Activated T-helper 2 cell treated with anti-CD3 and anti-CD28 coated beads, Interferon-gamma antibody, Interleukin-2, Interleukin-4, amounts not matched to agents 10 μg/mL and 5 μg/mL and 100 μg/mL, durations not matched to agents 14 hours and 24 hours and 36 hours (primary cell): ENCODE measurements at regions of chr11 and their contacts with region 1.

Region 1: GRCh38 chr11:9137293-9138132 is 46.1 kb upstream of the SCUBE2 start:
- DNase-seq: peak; percentile 60
- H3K4me3 Mint-ChIP-seq: no peak overlapping the region
- H3K27ac Mint-ChIP-seq: peak overlapping the region; percentile 1
- H3K4me1 Mint-ChIP-seq: peaks cover 33% of the 10 kb centered on the region
- H3K27me3 Mint-ChIP-seq: no peaks in the 10 kb centered on the region

Region 2: DNA sequence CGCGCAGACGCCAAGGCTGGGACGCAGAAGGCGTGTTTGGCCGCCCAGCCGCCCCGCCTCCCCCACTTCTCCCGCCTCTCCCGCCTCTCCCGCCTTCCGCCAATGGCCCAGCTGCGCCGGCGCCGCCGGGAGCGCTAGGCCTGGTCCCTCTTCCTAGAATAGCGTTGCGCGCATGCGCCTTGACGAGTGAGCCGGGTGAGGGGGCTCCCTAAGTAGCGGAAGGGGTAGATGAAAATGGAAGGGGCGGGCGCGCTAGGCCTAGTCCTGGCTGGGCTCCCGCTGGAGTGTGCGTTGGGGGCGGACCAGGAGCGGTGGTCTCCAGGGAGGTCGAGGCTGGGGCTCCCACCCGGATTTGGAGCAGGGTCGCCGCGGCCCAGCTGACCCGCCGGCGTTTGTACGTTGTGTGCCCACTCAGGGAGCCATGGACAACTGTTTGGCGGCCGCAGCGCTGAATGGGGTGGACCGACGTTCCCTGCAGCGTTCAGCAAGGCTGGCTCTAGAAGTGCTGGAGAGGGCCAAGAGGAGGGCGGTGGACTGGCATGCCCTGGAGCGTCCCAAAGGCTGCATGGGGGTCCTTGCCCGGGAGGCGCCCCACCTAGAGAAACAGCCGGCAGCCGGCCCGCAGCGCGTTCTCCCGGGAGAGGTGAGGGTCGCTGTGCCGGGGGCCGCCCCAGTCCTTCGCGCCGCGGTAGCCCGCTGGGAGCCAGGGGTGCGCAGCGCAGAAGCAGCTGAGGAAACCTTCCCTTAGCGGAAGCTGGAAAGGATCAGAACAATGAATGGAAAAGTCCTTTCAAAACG is 226.3 kb before region 1 on chr11 and contains the start of gene AKIP1:
- intact Hi-C with region 1: loop called (anchors 1 kb)
- DNase-seq: peak; percentile 73
- H3K4me3 Mint-ChIP-seq: peak within 1 kb of the TSS; percentile 94
- H3K27ac Mint-ChIP-seq: peak within 1 kb of the TSS; percentile 82
- H3K4me1 Mint-ChIP-seq: peaks cover 36% of the 10 kb centered on the region
- H3K27me3 Mint-ChIP-seq: peaks cover 30% of the 10 kb centered on the region
- total RNA-seq, gene AKIP1: 22.2 and 23.4 TPM in 2 replicates

Region 3: GRCh38 chr11:8964324-8965320 is 172.9 kb before region 1 on chr11 and contains the start of gene TMEM9B:
- intact Hi-C with region 1: loop called (anchors 1 kb)
- DNase-seq: peak; percentile 79
- H3K4me3 Mint-ChIP-seq: peak within 1 kb of the TSS; percentile 95
- H3K27ac Mint-ChIP-seq: peak within 1 kb of the TSS; percentile 92
- H3K4me1 Mint-ChIP-seq: peaks cover 32% of the 10 kb centered on the region
- H3K27me3 Mint-ChIP-seq: no peaks in the 10 kb centered on the region
- total RNA-seq, gene TMEM9B: 20.8 and 21.9 TPM in 2 replicates

Region 4: GRCh38 chr11:9003573-9004309 is 133.8 kb before region 1 on chr11 and contains the start of gene NRIP3:
- intact Hi-C with region 1: loop called (anchors 5 kb)
- DNase-seq: peak; percentile 71
- H3K4me3 Mint-ChIP-seq: peak within 1 kb of the TSS; percentile 75
- H3K27ac Mint-ChIP-seq: peak within 1 kb of the TSS; percentile 23
- H3K4me1 Mint-ChIP-seq: peaks cover 29% of the 10 kb centered on the region
- H3K27me3 Mint-ChIP-seq: peaks cover 51% of the 10 kb centered on the region
- total RNA-seq, gene NRIP3: 5.0 and 5.5 TPM in 2 replicates

Region 5: GRCh38 chr11:9015677-9016076 is 121.8 kb before region 1 on chr11:
- intact Hi-C with region 1: loop called (anchors 1 kb)
- DNase-seq: peak; percentile 47
- H3K4me3 Mint-ChIP-seq: no peak overlapping the region
- H3K27ac Mint-ChIP-seq: no peak overlapping the region
- H3K4me1 Mint-ChIP-seq: peaks cover 23% of the 10 kb centered on the region
- H3K27me3 Mint-ChIP-seq: peaks cover 20% of the 10 kb centered on the region

Region 6: DNA sequence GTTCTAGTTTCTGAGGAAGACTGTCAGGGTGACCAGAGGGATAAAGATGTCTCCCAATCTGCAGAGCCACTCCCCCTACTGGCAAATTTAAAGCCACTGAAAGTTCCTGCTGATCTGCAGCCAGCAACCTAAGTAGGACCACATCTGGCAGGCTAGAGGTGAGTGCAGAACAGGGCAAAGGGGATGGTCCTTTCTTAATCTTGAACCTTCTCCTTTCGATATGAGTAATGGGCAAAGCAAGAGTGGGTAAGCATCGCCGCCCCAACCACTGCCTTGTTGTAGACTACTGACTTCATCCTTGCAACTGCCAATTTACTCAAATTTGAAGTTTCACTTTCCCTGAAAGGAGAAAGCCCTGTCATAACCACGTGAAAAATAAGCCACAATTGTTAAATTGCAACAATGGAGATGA is 76.8 kb before region 1 on chr11:
- intact Hi-C with region 1: loop called (anchors 2 kb)
- DNase-seq: peak; percentile 68
- H3K4me3 Mint-ChIP-seq: no peak overlapping the region
- H3K27ac Mint-ChIP-seq: peak overlapping the region; percentile 14
- H3K4me1 Mint-ChIP-seq: peaks cover 30% of the 10 kb centered on the region
- H3K27me3 Mint-ChIP-seq: peaks cover 19% of the 10 kb centered on the region

Region 7: DNA sequence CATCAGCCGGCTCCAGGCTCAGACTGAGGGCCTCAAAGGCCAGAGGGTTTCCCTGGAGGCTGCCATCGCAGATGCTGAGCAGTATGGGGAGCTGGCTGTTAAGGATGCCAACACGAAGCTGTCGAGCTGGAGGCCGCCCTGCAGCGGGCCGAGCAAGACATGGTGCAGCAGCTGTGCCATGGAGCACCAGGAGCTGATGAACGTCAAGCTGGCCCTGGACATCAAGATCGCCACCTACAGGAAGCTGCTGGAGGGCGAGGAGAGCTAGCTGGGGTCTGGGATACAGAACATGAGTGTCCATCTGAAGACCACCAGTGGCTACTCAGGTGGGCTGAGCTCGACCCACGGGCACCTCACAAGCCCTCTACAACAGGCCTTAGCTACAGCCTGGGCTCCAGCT is 42.1 kb before region 1 on chr11:
- intact Hi-C with region 1: loop called (anchors 5 kb)
- DNase-seq: no peak
- H3K4me3 Mint-ChIP-seq: no peak overlapping the region
- H3K27ac Mint-ChIP-seq: no peak overlapping the region
- H3K4me1 Mint-ChIP-seq: no peaks in the 10 kb centered on the region
- H3K27me3 Mint-ChIP-seq: peaks cover 51% of the 10 kb centered on the region